Mammary epithelial cell (primary cell): ENCODE measurements at regions of chr10 and their contacts with region 1.

Region 1: GRCh38 chr10:78029269-78030226 is at the start of gene POLR3A:
- DNase-seq: peak; percentile 96
- H3K4me3 ChIP-seq: peak within 1 kb of the TSS; percentile 87 to 94 (median 87)
- H3K27ac ChIP-seq: peak within 1 kb of the TSS; percentile 74
- H3K4me1 ChIP-seq: peaks cover 38% of the 10 kb centered on the region
- H3K27me3 ChIP-seq: no peaks in the 10 kb centered on the region
- CTCF ChIP-seq: peak; percentile 53 to 72
- total RNA-seq, gene POLR3A: 20.8 to 21.2 TPM

Region 2: GRCh38 chr10:77907900-77908717 is 121.4 kb before region 1 on chr10:
- CTCF ChIA-PET with region 1: no interaction called
- dilution Hi-C with region 1: no loop called
- in situ Hi-C with region 1: no loop called
- intact Hi-C with region 1: no loop called
- DNase-seq: no peak
- H3K4me3 ChIP-seq: no peak overlapping the region
- H3K27ac ChIP-seq: no peak overlapping the region
- H3K4me1 ChIP-seq: peaks cover 12% of the 10 kb centered on the region
- H3K27me3 ChIP-seq: no peaks in the 10 kb centered on the region
- CTCF ChIP-seq: peak; percentile 39 to 52

Region 3: DNA sequence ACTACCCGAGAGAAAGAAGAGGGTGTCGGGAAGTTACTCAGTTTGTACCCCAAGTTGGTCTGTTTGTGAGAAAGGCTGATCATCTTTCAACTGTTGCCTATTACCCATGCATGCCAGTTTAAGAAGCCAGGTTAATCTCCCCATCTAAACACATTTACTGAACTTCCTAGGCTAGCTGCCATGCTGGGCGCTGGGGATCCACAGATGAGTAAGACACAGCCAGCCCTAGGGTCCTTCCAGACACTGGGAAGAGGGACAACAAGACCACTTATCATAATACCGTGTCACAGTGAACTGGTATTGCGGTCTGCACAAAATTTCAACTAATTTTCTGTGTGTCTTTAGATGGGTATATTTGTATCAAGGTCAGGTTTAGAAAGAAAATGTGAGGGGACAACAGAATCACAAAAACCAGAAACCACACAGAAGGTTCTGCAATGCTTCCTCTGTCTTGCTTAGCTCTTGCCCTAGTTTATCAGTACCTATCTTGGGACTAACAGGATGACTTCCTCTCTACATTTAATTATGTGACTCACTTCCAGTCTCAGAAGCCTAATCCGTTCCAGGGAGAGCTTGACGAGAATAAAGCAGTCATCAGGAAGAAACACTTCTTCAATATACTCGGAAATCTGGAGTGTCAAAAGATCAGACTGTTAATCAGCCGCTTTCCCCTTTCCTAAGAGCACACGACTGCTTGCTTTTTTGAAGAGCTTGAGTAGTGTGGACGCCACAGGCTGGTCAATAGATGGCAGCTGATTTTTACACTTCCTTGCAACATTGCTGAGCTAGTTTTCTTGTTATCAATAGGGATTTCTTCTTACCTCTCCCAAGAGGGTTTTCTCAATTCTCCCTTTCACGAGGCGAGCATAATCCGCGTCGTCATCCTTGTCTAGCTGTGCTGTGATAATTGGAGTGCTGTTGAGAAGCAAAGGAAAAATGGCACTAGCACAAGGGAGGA is 45.9 kb before region 1 on chr10:
- CTCF ChIA-PET with region 1: no interaction called
- dilution Hi-C with region 1: loop called (anchors 5 kb)
- in situ Hi-C with region 1: no loop called
- intact Hi-C with region 1: no loop called
- DNase-seq: no peak
- H3K4me3 ChIP-seq: no peak overlapping the region
- H3K27ac ChIP-seq: no peak overlapping the region
- H3K4me1 ChIP-seq: no peaks in the 10 kb centered on the region
- H3K27me3 ChIP-seq: no peaks in the 10 kb centered on the region
- CTCF ChIP-seq: no peak

Region 4: GRCh38 chr10:78899996-78900714 is 870.6 kb after region 1 on chr10:
- CTCF ChIA-PET with region 1: no interaction called
- dilution Hi-C with region 1: no loop called
- in situ Hi-C with region 1: no loop called
- intact Hi-C with region 1: no loop called
- DNase-seq: no peak
- H3K4me3 ChIP-seq: no peak overlapping the region
- H3K27ac ChIP-seq: no peak overlapping the region
- H3K4me1 ChIP-seq: no peaks in the 10 kb centered on the region
- H3K27me3 ChIP-seq: no peaks in the 10 kb centered on the region
- CTCF ChIP-seq: no peak